ENCODE measurements at regions of chr12 and their contacts with region 1.

Region 1: GRCh38 chr12:116277393-116278278 is at the start of gene MED13L:
- DNase-seq: peak; percentile 90 to 94
- ATAC-seq: peak; percentile 91 to 95 (median 94)
- H3K4me3 ChIP-seq: peak within 1 kb of the TSS; percentile 86
- H3K27ac ChIP-seq: peak within 1 kb of the TSS; percentile 95
- H3K4me1 ChIP-seq: peaks cover 31% of the 10 kb centered on the region
- H3K27me3 ChIP-seq: no peaks in the 10 kb centered on the region
- CTCF ChIP-seq: peak; percentile 50
- total RNA-seq, gene MED13L: 72.5 to 90.5 (median 75.2) TPM

Region 2: DNA sequence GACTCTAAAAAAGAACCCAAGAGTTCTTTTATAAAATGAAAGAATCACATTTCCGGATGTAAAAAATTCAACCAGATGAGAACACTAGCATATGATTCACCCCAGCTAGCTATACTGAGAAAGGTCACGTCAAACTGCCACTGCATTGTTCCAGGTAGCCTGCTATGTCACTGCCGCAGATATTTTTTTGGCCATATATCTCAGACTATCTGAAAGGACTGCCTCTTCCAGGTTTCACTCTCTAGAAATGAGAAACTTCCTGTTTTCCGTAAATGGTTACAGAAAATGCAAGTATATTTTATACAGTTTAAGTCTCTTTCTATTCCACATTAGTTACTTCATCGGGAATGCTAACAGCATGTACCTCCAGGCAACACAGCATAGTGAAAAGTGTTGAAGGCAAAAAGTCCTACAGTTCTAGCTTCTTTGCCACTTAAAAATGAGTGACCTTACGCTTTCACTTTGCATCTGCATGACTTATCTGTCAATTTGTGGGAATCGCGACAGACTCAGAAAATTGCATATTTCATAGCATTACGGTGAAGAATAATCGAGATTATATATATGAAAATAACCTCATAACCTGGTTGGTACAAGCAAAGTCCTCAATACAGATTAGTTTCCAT is 105.3 kb before region 1 on chr12:
- intact Hi-C with region 1: no loop called
- DNase-seq: no peak
- ATAC-seq: peak; percentile 40 to 72 (median 59)
- H3K4me3 ChIP-seq: no peak overlapping the region
- H3K27ac ChIP-seq: peak overlapping the region; percentile 25
- H3K4me1 ChIP-seq: peaks cover 52% of the 10 kb centered on the region
- H3K27me3 ChIP-seq: no peaks in the 10 kb centered on the region
- CTCF ChIP-seq: no peak

Region 3: GRCh38 chr12:116319898-116320621 is 42.4 kb after region 1 on chr12:
- intact Hi-C with region 1: loop called (anchors 1 to 5 kb)
- DNase-seq: peak; percentile 65 to 83
- ATAC-seq: peak; percentile 95 to 96 (median 96)
- H3K4me3 ChIP-seq: peak overlapping the region; percentile 62
- H3K27ac ChIP-seq: peak overlapping the region; percentile 92
- H3K4me1 ChIP-seq: peaks cover 20% of the 10 kb centered on the region
- H3K27me3 ChIP-seq: no peaks in the 10 kb centered on the region
- CTCF ChIP-seq: no peak

Region 4: DNA sequence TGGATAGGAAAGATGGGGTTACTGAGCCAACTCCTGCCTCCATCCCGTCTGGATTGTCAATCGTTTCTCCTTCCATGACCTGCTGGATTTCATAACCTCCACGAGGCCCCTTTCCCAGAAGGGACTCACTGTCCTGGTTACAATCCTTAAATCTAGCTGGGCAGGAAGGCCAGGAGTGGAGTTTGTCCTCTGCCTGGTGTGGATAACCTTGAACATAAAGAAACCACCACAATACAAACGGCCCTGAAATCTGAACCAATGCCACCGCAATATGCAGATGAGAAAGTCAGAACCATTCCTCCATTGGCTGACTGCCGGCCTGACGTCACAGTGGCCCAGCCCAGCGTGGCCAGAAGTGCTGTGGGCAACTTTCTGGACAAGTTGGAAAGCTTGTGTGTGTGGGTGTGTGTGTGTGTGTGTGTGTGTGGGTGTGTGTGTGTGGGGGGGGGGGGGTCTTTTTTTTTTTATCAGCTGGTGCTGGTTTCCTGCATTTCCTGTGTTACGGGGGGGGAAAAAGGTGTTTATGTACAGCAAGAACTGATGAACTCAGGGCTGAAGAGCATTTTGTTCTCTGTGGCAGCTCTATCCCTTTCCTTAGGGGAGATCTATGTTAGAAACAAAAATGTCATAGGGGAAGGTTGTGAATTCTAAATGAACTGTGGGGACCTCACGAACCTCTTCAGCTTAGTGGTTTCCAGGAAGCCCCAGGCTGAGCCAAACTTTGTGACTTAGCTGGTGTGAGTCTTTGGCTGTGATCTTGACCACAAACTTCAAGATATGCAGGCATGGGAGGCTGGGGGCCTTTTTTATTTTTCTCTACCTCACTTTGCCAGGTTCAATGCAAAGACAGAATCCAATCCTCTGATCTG is 81.5 kb after region 1 on chr12:
- intact Hi-C with region 1: loop called in 1 of 2 experiments (anchors 5 kb)
- DNase-seq: peak; percentile 94 to 95
- ATAC-seq: peak; percentile 77 to 93 (median 86)
- H3K4me3 ChIP-seq: peak overlapping the region; percentile 49
- H3K27ac ChIP-seq: peak overlapping the region; percentile 74
- H3K4me1 ChIP-seq: peaks cover 31% of the 10 kb centered on the region
- H3K27me3 ChIP-seq: no peaks in the 10 kb centered on the region
- CTCF ChIP-seq: no peak

Region 5: GRCh38 chr12:116406516-116406915 is 128.9 kb after region 1 on chr12:
- intact Hi-C with region 1: loop called (anchors 5 to 10 kb)
- DNase-seq: peak; percentile 95 to 97
- ATAC-seq: peak; percentile 98 to 99 (median 98)
- H3K4me3 ChIP-seq: no peak overlapping the region
- H3K27ac ChIP-seq: peak overlapping the region; percentile 46
- H3K4me1 ChIP-seq: peaks cover 8% of the 10 kb centered on the region
- H3K27me3 ChIP-seq: no peaks in the 10 kb centered on the region
- CTCF ChIP-seq: no peak

Region 6: GRCh38 chr12:116591855-116592637 is 314.4 kb after region 1 on chr12:
- intact Hi-C with region 1: loop called in 1 of 2 experiments (anchors 5 kb)
- DNase-seq: peak; percentile 42 to 60
- ATAC-seq: peak in 2 of 4 donors; percentile 24 to 52
- H3K4me3 ChIP-seq: no peak overlapping the region
- H3K27ac ChIP-seq: no peak overlapping the region
- H3K4me1 ChIP-seq: peaks cover 6% of the 10 kb centered on the region
- H3K27me3 ChIP-seq: no peaks in the 10 kb centered on the region
- CTCF ChIP-seq: no peak

Region 7: DNA sequence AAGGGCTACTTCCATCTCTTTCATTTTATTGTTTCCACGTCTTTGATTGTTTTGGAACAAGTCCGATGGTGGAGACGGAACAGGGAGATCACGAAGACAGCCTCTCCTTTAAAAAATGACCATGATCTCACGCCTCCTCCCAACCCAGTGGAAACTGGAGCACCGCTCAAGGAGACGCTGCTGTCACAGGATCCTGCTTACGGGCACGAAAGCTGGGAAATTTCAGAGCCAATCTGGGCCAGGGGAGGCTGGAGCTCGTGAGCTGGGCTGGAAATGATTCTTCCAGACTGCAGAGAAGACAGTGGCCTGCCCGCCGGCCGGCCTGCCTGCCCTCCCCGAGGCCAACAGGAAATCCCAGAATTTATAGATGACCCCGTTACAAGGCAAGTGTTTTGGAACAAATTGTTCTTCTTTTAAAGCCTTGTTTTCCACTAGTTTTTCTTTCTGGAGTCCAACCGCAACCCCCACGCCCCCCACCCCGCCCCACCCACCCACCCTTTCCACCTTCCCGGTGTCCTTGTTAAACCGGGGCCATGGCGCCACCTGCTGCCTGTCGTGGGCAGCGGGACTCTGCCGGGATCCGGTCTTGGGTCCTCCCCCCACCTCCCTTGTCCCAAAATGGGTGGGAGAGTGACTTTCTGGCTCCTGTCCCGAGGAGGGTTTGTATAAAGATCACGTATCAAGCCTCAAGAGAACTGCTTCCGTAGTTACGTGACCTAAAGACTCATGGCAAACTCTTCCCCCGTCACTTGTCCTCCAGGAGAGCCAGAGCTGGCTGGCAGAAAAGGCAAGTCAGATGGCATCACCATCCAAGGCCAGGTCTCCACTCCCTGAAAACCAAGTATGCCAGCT is 321.9 kb after region 1 on chr12:
- intact Hi-C with region 1: loop called (anchors 2 to 5 kb)
- DNase-seq: peak; percentile 86 to 91
- ATAC-seq: peak; percentile 87 to 96 (median 93)
- H3K4me3 ChIP-seq: peak overlapping the region; percentile 67
- H3K27ac ChIP-seq: peak overlapping the region; percentile 83
- H3K4me1 ChIP-seq: peaks cover 16% of the 10 kb centered on the region
- H3K27me3 ChIP-seq: no peaks in the 10 kb centered on the region
- CTCF ChIP-seq: peak; percentile 64